ENCODE measurements at regions of chr6 and their contacts with region 1.

Region 1: DNA sequence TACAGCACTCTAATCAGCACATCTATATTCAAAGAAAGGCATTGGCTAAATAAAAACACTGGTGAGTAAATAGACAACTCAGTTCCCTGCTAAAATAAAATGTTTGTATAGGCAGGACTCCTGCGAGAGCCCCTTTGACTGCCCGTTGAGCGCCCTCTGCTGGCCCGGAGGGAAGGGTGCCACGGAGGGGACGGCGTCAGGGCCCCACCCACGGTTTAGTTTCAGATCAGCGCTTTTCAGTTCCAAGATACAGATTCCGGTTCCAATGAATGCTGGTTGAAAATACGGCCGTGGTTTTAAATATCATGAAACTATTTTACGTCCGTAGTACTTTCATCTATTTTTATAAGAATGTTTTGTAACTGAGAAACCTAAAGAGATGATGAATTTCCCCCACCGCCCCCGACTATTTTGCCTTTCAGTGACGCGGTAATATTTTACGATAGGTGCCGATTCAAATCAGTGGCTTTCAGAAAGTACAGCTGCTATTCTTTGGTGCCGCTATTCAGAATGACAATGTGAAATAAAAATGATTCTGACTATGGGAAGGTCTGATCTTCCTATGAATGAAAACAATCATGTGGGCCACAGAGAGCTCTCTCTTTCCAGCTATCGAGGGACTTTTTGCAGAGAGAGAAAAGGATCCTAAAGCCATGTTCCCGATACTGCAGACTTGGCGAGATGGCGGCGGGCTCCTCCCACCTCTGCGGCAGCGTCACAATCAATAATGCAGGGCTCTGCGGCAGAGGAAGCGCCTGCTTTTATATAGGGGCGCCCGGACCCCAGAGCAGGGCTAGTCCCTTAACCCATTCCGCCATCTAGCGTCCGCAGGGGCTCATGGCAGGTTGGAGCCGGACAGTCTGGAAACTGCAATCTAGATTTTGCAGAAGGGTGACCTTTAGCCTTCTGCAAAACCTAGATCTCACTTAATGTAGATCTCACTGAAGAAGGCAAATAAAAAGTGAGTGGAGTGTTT is 10.6 kb upstream of the CCN6 start:
- DNase-seq: peak; percentile 79
- H3K4me3 ChIP-seq: peak overlapping the region; percentile 70 to 79 (median 71)
- H3K27ac ChIP-seq: peak overlapping the region; percentile 95
- H3K4me1 ChIP-seq: peaks cover 1% of the 10 kb centered on the region
- H3K27me3 ChIP-seq: no peaks in the 10 kb centered on the region
- CTCF ChIP-seq: peak; percentile 96 to 98

Region 2: DNA sequence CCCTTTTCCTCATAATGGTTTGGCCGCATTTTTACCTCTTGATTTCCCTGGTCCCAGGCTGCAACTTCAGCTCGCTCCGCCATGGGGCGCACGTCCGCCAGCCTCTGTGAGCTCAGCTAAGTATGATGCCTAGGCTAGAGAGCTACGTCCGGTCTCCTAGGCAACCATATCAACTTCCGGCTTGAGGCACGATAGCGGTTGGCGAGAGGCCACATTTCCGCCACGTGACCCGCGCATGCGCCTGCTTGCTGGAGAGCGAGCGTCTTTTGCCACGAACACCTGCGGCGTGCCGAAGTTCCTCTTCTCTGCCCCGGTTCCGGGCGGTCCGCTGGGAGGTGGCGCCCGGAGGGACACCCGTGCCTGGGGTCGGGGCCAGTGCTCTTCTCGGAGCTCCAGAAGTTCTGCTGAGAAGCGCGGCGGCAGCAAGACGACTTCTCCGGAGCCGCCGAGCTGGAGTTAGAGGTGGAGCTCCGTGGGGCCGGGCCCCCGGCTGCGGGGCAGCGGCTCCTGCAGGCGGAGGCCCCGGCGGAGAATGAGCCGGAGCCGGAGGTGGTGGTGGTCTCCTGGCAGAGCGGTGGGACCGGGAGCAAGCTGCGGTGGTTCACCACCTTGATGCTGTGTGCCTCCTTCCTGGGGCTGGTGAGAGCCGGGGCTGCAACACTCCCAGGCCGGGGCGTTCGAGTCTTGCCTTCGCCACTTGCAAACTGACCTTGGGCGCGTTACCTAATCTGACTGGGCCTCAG is 784.1 kb before region 1 on chr6:
- CTCF ChIA-PET with region 1: interaction called, 30 read pairs
- dilution Hi-C with region 1: no loop called
- in situ Hi-C with region 1: loop called in 1 of 2 experiments (anchors 25 kb)
- intact Hi-C with region 1: loop called (anchors 1 kb)
- DNase-seq: peak; percentile 98
- H3K4me3 ChIP-seq: peak overlapping the region; percentile 65 to 84 (median 80)
- H3K27ac ChIP-seq: peak overlapping the region; percentile 68
- H3K4me1 ChIP-seq: peaks cover 22% of the 10 kb centered on the region
- H3K27me3 ChIP-seq: no peaks in the 10 kb centered on the region
- CTCF ChIP-seq: peak; percentile 94 to 96

Region 3: DNA sequence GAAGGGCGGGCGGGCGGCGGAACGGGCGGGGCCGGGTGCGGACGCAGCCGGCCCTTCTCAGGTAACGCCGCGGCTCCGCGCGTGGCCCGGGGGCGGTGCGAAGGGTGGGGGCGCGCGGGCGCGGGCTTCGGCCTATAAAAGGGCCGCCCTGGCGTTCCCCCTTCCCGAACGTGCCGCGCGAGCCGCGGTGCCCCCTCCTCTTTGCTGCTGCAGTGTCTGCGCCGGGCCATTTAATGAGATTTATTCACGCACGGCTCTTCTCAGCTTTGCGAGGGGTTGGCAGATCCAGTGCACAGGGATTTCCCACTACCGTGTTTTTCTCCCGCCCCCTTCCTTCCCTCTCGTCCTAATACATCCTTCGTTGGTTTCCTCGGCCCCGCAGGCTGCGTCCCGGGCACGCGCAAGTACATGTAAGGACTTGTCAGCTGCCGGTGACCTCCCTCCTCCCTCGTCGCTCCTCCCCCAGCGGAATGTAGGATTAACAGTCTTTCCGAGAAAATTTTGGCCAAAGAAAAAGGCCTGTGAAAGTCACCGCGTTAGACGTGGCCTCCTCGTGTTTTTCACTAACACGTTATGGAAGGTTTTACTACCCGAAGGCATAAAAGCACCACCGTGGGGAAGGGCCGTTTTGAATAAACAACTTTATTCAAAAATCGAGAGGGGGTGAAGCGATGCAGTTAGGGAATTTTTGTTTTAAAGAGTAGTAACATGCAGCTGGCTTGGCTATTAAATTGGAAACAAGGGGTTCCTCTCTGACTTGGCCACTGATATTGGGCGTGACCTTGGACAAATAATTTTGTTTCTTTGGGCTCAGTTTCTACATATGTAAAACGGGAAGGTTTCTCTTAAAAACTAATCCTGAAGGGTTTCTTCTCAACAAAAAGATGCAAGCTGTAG is 559.3 kb before region 1 on chr6:
- CTCF ChIA-PET with region 1: no interaction called
- dilution Hi-C with region 1: no loop called
- in situ Hi-C with region 1: no loop called
- intact Hi-C with region 1: loop called (anchors 5 kb)
- DNase-seq: peak; percentile 91
- H3K4me3 ChIP-seq: peak overlapping the region; percentile 65 to 89 (median 84)
- H3K27ac ChIP-seq: peak overlapping the region; percentile 81
- H3K4me1 ChIP-seq: peaks cover 21% of the 10 kb centered on the region
- H3K27me3 ChIP-seq: no peaks in the 10 kb centered on the region
- CTCF ChIP-seq: no peak

Region 4: GRCh38 chr6:111642463-111643158 is 400.7 kb before region 1 on chr6:
- CTCF ChIA-PET with region 1: no interaction called
- dilution Hi-C with region 1: no loop called
- in situ Hi-C with region 1: no loop called
- intact Hi-C with region 1: loop called (anchors 1 kb)
- DNase-seq: peak; percentile 65
- H3K4me3 ChIP-seq: no peak overlapping the region
- H3K27ac ChIP-seq: no peak overlapping the region
- H3K4me1 ChIP-seq: no peaks in the 10 kb centered on the region
- H3K27me3 ChIP-seq: no peaks in the 10 kb centered on the region
- CTCF ChIP-seq: peak; percentile 54 to 74

Region 5: DNA sequence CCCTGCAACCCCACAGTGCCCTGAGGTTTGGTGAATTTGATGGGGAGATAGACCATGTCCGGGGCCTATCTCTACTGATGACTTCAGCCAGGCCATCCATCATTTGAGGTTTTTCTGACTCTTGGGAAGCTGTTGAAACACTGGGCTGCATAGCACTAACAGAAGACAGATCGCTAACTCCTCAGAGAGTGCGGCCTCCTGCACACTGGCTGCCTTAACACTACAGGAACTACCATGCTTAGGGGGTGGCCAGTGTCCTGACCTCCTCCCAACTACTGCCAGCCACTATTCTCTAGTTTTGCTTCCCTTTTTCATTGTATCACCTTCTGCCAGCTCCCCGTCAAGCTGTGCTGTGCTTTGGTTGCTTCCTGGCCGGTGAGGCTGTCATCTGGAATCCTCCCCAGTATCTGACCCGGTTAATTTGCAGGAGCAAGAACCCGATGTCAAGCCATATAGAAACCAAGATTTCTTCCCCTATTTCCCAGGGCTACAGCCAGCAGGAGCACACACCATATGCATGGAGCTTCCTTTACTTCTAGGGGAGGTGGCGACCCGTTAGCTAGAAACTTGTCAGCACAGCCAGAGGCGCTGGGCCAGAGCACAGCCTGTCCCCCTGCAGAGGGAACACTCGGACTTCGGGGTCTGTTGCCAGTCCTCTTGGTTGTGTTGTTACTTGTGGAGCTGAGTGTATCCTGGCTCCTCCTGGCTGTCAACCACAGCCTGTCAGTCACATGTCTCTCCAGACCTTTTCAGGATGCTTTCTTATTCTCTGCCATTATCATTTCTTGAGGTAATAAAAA is 380.3 kb before region 1 on chr6:
- CTCF ChIA-PET with region 1: no interaction called
- dilution Hi-C with region 1: no loop called
- in situ Hi-C with region 1: no loop called
- intact Hi-C with region 1: no loop called
- DNase-seq: no peak
- H3K4me3 ChIP-seq: no peak overlapping the region
- H3K27ac ChIP-seq: no peak overlapping the region
- H3K4me1 ChIP-seq: no peaks in the 10 kb centered on the region
- H3K27me3 ChIP-seq: no peaks in the 10 kb centered on the region
- CTCF ChIP-seq: no peak

Region 6: GRCh38 chr6:111873178-111874024 is 169.9 kb before region 1 on chr6 and contains the start of gene FYN:
- CTCF ChIA-PET with region 1: no interaction called
- dilution Hi-C with region 1: no loop called
- in situ Hi-C with region 1: no loop called
- intact Hi-C with region 1: loop called (anchors 2 kb)
- DNase-seq: peak; percentile 96
- H3K4me3 ChIP-seq: peak within 1 kb of the TSS; percentile 65 to 88 (median 78)
- H3K27ac ChIP-seq: peak within 1 kb of the TSS; percentile 31
- H3K4me1 ChIP-seq: peaks cover 15% of the 10 kb centered on the region
- H3K27me3 ChIP-seq: no peaks in the 10 kb centered on the region
- CTCF ChIP-seq: peak; percentile 29 to 46
- total RNA-seq, gene FYN: 58.0 to 136 TPM

Region 7: GRCh38 chr6:112010328-112010727 is 33.0 kb before region 1 on chr6:
- CTCF ChIA-PET with region 1: interaction called, 4 read pairs
- dilution Hi-C with region 1: no loop called
- in situ Hi-C with region 1: no loop called
- intact Hi-C with region 1: loop called (anchors 1 kb)
- DNase-seq: peak; percentile 21
- H3K4me3 ChIP-seq: no peak overlapping the region
- H3K27ac ChIP-seq: no peak overlapping the region
- H3K4me1 ChIP-seq: peaks cover 11% of the 10 kb centered on the region
- H3K27me3 ChIP-seq: no peaks in the 10 kb centered on the region
- CTCF ChIP-seq: peak in 1 of 2 donors; percentile 53

Region 8: GRCh38 chr6:112296122-112296521 is 252.8 kb after region 1 on chr6:
- CTCF ChIA-PET with region 1: no interaction called
- dilution Hi-C with region 1: no loop called
- in situ Hi-C with region 1: no loop called
- intact Hi-C with region 1: no loop called
- DNase-seq: peak; percentile 30
- H3K4me3 ChIP-seq: no peak overlapping the region
- H3K27ac ChIP-seq: no peak overlapping the region
- H3K4me1 ChIP-seq: peaks cover 15% of the 10 kb centered on the region
- H3K27me3 ChIP-seq: no peaks in the 10 kb centered on the region
- CTCF ChIP-seq: peak; percentile 49 to 50